PC-3 (cell line): ENCODE measurements at regions of chr6 and their contacts with region 1.

Region 1: GRCh38 chr6:15061180-15061641 is 184.7 kb upstream of the JARID2 start:
- DNase-seq: no peak
- ATAC-seq: no peak
- H3K4me3 ChIP-seq: no peak overlapping the region
- H3K27ac ChIP-seq: no peak overlapping the region
- H3K4me1 ChIP-seq: peaks cover 11% of the 10 kb centered on the region
- H3K27me3 ChIP-seq: no peaks in the 10 kb centered on the region
- CTCF ChIP-seq: no peak

Region 2: GRCh38 chr6:15194453-15194852 is 133.2 kb after region 1 on chr6:
- CTCF ChIA-PET with region 1: no interaction called
- POLR2A ChIA-PET with region 1: no interaction called
- intact Hi-C with region 1: no loop called
- DNase-seq: no peak
- ATAC-seq: no peak
- H3K4me3 ChIP-seq: no peak overlapping the region
- H3K27ac ChIP-seq: no peak overlapping the region
- H3K4me1 ChIP-seq: no peaks in the 10 kb centered on the region
- H3K27me3 ChIP-seq: no peaks in the 10 kb centered on the region
- CTCF ChIP-seq: no peak

Region 3: DNA sequence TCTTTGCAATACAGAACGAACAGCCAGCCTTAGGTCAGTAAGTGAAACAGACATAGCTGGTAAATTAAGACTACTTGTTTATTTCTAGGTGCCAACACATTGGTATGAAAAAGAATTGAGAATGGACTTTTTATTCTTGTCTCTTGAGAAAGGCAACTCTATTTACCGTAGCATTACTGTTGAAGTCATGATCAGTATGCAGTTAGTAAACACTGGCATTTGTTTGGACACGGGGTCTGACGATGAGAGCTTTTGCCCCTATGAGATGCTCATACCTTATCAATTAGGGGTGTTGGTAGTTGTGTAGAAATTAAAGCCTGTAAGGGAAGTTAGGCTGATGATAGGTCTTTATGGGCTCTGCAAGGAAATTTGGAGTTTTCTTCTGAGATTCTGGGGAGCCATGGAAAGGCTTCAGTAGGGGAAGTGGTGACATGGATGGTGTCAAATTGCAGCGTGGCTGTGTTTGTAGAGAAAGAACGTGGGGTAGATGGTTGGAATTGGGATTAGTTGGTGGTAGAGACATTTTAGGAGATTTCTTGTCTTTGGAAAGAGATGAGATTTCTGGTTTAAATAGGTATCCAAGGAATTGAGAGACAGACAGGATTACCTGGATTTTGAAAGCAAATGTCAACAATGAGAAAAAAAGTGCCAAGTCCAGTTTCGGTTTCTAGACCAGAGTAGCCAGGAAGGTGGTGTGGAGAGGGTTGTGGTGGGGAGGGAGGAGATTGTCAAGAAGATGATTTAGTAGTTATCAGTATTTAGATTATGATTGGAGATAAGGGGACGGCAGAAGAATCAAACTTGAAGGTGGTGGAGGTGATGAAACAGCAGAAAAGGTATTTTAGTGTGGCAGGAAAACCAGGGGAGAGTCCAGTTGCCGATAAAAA is 301.3 kb after region 1 on chr6:
- CTCF ChIA-PET with region 1: no interaction called
- POLR2A ChIA-PET with region 1: interaction called, 10 read pairs
- intact Hi-C with region 1: no loop called
- DNase-seq: no peak
- ATAC-seq: no peak
- H3K4me3 ChIP-seq: no peak overlapping the region
- H3K27ac ChIP-seq: no peak overlapping the region
- H3K4me1 ChIP-seq: peaks cover 20% of the 10 kb centered on the region
- H3K27me3 ChIP-seq: no peaks in the 10 kb centered on the region
- CTCF ChIP-seq: no peak